ENCODE measurements at regions of chr21 and their contacts with region 1.

Region 1: GRCh38 chr21:33360881-33361602 is 36.3 kb downstream of the IFNAR1 start:
- DNase-seq: peak; percentile 80 to 93 (median 88)
- ATAC-seq: peak; percentile 68
- H3K4me3 ChIP-seq: peak overlapping the region; percentile 44
- H3K4me3 Mint-ChIP-seq: peak overlapping the region; percentile 90
- H3K27ac ChIP-seq: peak overlapping the region; percentile 66 to 79
- H3K27ac Mint-ChIP-seq: peak overlapping the region; percentile 88
- H3K4me1 ChIP-seq: peaks cover 17% of the 10 kb centered on the region
- H3K4me1 Mint-ChIP-seq: peaks cover 26% of the 10 kb centered on the region
- H3K27me3 ChIP-seq: no peaks in the 10 kb centered on the region
- H3K27me3 Mint-ChIP-seq: no peaks in the 10 kb centered on the region
- CTCF ChIP-seq: peak; percentile 88

Region 2: GRCh38 chr21:33132054-33132453 is 229.0 kb before region 1 on chr21:
- CTCF ChIA-PET with region 1: no interaction called
- POLR2A ChIA-PET with region 1: no interaction called
- intact Hi-C with region 1: no loop called
- DNase-seq: peak in 2 of 14 experiments; percentile 16 to 22
- ATAC-seq: no peak
- H3K4me3 ChIP-seq: no peak overlapping the region
- H3K4me3 Mint-ChIP-seq: no peak overlapping the region
- H3K27ac ChIP-seq: no peak overlapping the region
- H3K27ac Mint-ChIP-seq: no peak overlapping the region
- H3K4me1 ChIP-seq: peaks cover 6% of the 10 kb centered on the region
- H3K4me1 Mint-ChIP-seq: peaks cover 11% of the 10 kb centered on the region
- H3K27me3 ChIP-seq: peaks cover 0 to 3% of the 10 kb centered on the region in 2 experiments
- H3K27me3 Mint-ChIP-seq: peaks cover 30% of the 10 kb centered on the region
- CTCF ChIP-seq: peak; percentile 45

Region 3: GRCh38 chr21:33266050-33266788 is 94.8 kb before region 1 on chr21 and contains the start of gene IL10RB:
- CTCF ChIA-PET with region 1: interaction called, 4 read pairs
- POLR2A ChIA-PET with region 1: interaction called, 27 read pairs
- intact Hi-C with region 1: loop called in 1 of 2 experiments (anchors 5 kb)
- DNase-seq: peak; percentile 47 to 89 (median 72)
- ATAC-seq: peak; percentile 71
- H3K4me3 ChIP-seq: peak within 1 kb of the TSS; percentile 98
- H3K4me3 Mint-ChIP-seq: peak within 1 kb of the TSS; percentile 99
- H3K27ac ChIP-seq: peak within 1 kb of the TSS; percentile 79 to 85
- H3K27ac Mint-ChIP-seq: peak within 1 kb of the TSS; percentile 94
- H3K4me1 ChIP-seq: peaks cover 62% of the 10 kb centered on the region
- H3K4me1 Mint-ChIP-seq: peaks cover 60% of the 10 kb centered on the region
- H3K27me3 ChIP-seq: no peaks in the 10 kb centered on the region
- H3K27me3 Mint-ChIP-seq: no peaks in the 10 kb centered on the region
- CTCF ChIP-seq: no peak
- total RNA-seq, gene IL10RB: 7.2 to 9.2 TPM

Region 4: GRCh38 chr21:33324291-33325221 is 36.5 kb before region 1 on chr21 and contains the start of gene IFNAR1:
- CTCF ChIA-PET with region 1: interaction called, 18 read pairs
- POLR2A ChIA-PET with region 1: interaction called, 120 read pairs
- intact Hi-C with region 1: loop called (anchors 1 to 5 kb)
- DNase-seq: peak; percentile 98 to 100 (median 99)
- ATAC-seq: peak; percentile 87
- H3K4me3 ChIP-seq: peak within 1 kb of the TSS; percentile 90
- H3K4me3 Mint-ChIP-seq: no peak within 1 kb of the TSS
- H3K27ac ChIP-seq: peak within 1 kb of the TSS; percentile 95 to 99
- H3K27ac Mint-ChIP-seq: no peak within 1 kb of the TSS
- H3K4me1 ChIP-seq: peaks cover 29% of the 10 kb centered on the region
- H3K4me1 Mint-ChIP-seq: peaks cover 31% of the 10 kb centered on the region
- H3K27me3 ChIP-seq: no peaks in the 10 kb centered on the region
- H3K27me3 Mint-ChIP-seq: no peaks in the 10 kb centered on the region
- CTCF ChIP-seq: no peak
- total RNA-seq, gene IFNAR1: 20.4 to 26.8 TPM

Region 5: DNA sequence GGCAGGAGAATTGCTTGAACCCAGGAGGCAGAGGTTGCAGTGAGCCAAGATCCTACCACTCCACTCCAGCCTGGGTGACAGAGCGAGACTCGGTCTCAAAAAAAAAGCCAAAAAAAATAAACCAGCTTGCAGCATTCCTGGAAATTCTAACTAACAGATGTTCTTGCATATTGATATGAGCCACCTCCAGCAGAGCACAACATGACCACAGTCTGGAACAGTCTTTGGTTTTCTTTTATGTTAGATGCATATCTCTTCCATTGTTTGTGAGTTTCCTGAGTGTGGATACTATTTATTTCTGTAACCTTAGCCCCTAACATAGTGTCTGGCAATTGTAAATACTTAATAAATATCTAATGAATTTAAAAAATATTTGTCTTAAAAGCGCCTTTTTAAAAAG is 12.3 kb before region 1 on chr21:
- CTCF ChIA-PET with region 1: interaction called, 26 read pairs
- POLR2A ChIA-PET with region 1: interaction called, 23 read pairs
- intact Hi-C with region 1: no loop called
- DNase-seq: no peak
- ATAC-seq: no peak
- H3K4me3 ChIP-seq: no peak overlapping the region
- H3K4me3 Mint-ChIP-seq: no peak overlapping the region
- H3K27ac ChIP-seq: no peak overlapping the region
- H3K27ac Mint-ChIP-seq: peak overlapping the region; percentile 84
- H3K4me1 ChIP-seq: no peaks in the 10 kb centered on the region
- H3K4me1 Mint-ChIP-seq: peaks cover 23% of the 10 kb centered on the region
- H3K27me3 ChIP-seq: no peaks in the 10 kb centered on the region
- H3K27me3 Mint-ChIP-seq: no peaks in the 10 kb centered on the region
- CTCF ChIP-seq: no peak

Region 6: DNA sequence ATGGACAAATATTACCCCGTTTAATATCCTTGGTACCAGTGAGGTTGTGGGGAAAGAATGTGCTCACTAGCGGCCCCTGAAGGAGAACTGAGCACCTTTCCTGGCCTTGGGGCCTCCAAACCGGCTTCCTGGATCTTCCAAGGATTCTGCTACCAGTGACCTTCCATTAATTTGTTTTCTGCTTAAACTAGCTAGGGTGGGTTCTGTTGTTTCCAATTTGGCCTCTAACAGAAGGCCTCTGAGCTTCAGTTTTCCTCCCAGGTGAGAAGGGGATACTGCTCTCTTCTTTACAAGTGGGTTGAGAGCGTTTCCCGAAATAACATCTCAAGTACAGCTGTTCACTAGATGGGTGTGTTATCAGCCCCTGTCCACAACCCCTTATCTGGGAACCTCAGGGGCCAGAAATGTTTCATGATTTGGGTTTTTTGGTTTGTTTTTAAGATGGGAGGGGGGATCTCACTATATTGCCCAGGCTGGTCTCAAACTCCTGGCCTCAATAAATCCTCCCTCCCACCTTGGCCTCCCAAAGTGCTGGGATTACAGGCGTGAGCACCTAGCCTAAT is 25.3 kb after region 1 on chr21:
- CTCF ChIA-PET with region 1: interaction called, 34 read pairs
- POLR2A ChIA-PET with region 1: interaction called, 51 read pairs
- intact Hi-C with region 1: no loop called
- DNase-seq: no peak
- ATAC-seq: no peak
- H3K4me3 ChIP-seq: no peak overlapping the region
- H3K4me3 Mint-ChIP-seq: no peak overlapping the region
- H3K27ac ChIP-seq: no peak overlapping the region
- H3K27ac Mint-ChIP-seq: no peak overlapping the region
- H3K4me1 ChIP-seq: peaks cover 45% of the 10 kb centered on the region
- H3K4me1 Mint-ChIP-seq: peaks cover 44% of the 10 kb centered on the region
- H3K27me3 ChIP-seq: no peaks in the 10 kb centered on the region
- H3K27me3 Mint-ChIP-seq: no peaks in the 10 kb centered on the region
- CTCF ChIP-seq: no peak

Region 7: GRCh38 chr21:33441489-33442477 is 80.7 kb after region 1 on chr21:
- CTCF ChIA-PET with region 1: interaction called, 24 read pairs
- POLR2A ChIA-PET with region 1: interaction called, 30 read pairs
- intact Hi-C with region 1: loop called (anchors 1 to 5 kb)
- DNase-seq: no peak
- ATAC-seq: no peak
- H3K4me3 ChIP-seq: no peak overlapping the region
- H3K4me3 Mint-ChIP-seq: no peak overlapping the region
- H3K27ac ChIP-seq: no peak overlapping the region
- H3K27ac Mint-ChIP-seq: no peak overlapping the region
- H3K4me1 ChIP-seq: no peaks in the 10 kb centered on the region
- H3K4me1 Mint-ChIP-seq: peaks cover 5% of the 10 kb centered on the region
- H3K27me3 ChIP-seq: no peaks in the 10 kb centered on the region
- H3K27me3 Mint-ChIP-seq: no peaks in the 10 kb centered on the region
- CTCF ChIP-seq: no peak

Measured in CD4-positive, alpha-beta T cell (primary cell).